ENCODE measurements at regions of chr11 and their contacts with region 1.

Region 1: GRCh38 chr11:59186130-59186594 is 14.2 kb downstream of the DTX4 start:
- DNase-seq: no peak
- ATAC-seq: peak; percentile 88
- H3K4me3 ChIP-seq: no peak overlapping the region
- H3K27ac ChIP-seq: no peak overlapping the region
- H3K4me1 ChIP-seq: peaks cover 10% of the 10 kb centered on the region
- H3K27me3 ChIP-seq: no peaks in the 10 kb centered on the region
- CTCF ChIP-seq: peak; percentile 67 to 92 (median 89)
- EP300 ChIP-seq: no peak
- POLR2A ChIP-seq: no peak
- RAD21 ChIP-seq: peak; percentile 46

Region 2: DNA sequence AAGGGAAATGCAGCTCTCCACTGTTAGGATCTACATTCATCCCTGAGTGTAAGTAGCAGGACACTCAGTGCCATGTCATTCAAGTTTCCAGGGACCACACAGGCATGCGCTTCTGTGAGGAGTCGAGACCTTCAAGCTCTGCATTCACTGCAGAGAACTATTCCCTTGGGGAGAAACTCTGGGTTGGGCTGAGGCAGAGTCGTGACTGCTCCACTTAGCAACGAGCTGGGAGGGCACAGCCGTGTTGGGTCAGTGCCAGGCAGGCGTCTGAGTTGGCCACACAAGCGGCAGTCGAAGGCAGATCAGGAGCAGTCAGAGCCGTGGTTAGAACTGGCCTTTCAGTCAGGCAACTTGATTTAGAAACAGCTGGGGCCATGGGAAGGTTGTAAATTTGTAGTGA is 11.8 kb after region 1 on chr11:
- CTCF ChIA-PET with region 1: interaction called, 1,180 read pairs
- POLR2A ChIA-PET with region 1: interaction called, 15 read pairs
- RAD21 ChIA-PET with region 1: interaction called, 21 read pairs
- SMC1A ChIA-PET with region 1: interaction called, 155 read pairs
- in situ Hi-C with region 1: no loop called
- intact Hi-C with region 1: loop called (anchors 1 kb)
- DNase-seq: no peak
- ATAC-seq: no peak
- H3K4me3 ChIP-seq: no peak overlapping the region
- H3K27ac ChIP-seq: peak overlapping the region; percentile 94
- H3K4me1 ChIP-seq: peaks cover 35% of the 10 kb centered on the region
- H3K27me3 ChIP-seq: no peaks in the 10 kb centered on the region
- CTCF ChIP-seq: no peak
- EP300 ChIP-seq: no peak
- POLR2A ChIP-seq: no peak
- RAD21 ChIP-seq: no peak

Region 3: GRCh38 chr11:59224351-59224928 is 38.3 kb after region 1 on chr11:
- CTCF ChIA-PET with region 1: interaction called, 17 read pairs
- POLR2A ChIA-PET with region 1: no interaction called
- RAD21 ChIA-PET with region 1: interaction called, 3 read pairs
- SMC1A ChIA-PET with region 1: interaction called, 3 read pairs
- in situ Hi-C with region 1: no loop called
- intact Hi-C with region 1: no loop called
- DNase-seq: no peak
- ATAC-seq: peak; percentile 49
- H3K4me3 ChIP-seq: no peak overlapping the region
- H3K27ac ChIP-seq: peak overlapping the region; percentile 50
- H3K4me1 ChIP-seq: peaks cover 45% of the 10 kb centered on the region
- H3K27me3 ChIP-seq: no peaks in the 10 kb centered on the region
- CTCF ChIP-seq: no peak
- EP300 ChIP-seq: no peak
- POLR2A ChIP-seq: no peak
- RAD21 ChIP-seq: no peak

Region 4: GRCh38 chr11:59573234-59573633 is 387.1 kb after region 1 on chr11:
- CTCF ChIA-PET with region 1: no interaction called
- POLR2A ChIA-PET with region 1: no interaction called
- RAD21 ChIA-PET with region 1: no interaction called
- SMC1A ChIA-PET with region 1: no interaction called
- in situ Hi-C with region 1: no loop called
- intact Hi-C with region 1: no loop called
- DNase-seq: no peak
- ATAC-seq: no peak
- H3K4me3 ChIP-seq: no peak overlapping the region
- H3K27ac ChIP-seq: no peak overlapping the region
- H3K4me1 ChIP-seq: no peaks in the 10 kb centered on the region
- H3K27me3 ChIP-seq: no peaks in the 10 kb centered on the region
- CTCF ChIP-seq: no peak
- EP300 ChIP-seq: no peak
- POLR2A ChIP-seq: no peak; the same call in 1 of the 2 replicates
- RAD21 ChIP-seq: no peak

Measured in GM12878 (cell line).